ENCODE measurements at regions of chr11 and their contacts with region 1.

Region 1: DNA sequence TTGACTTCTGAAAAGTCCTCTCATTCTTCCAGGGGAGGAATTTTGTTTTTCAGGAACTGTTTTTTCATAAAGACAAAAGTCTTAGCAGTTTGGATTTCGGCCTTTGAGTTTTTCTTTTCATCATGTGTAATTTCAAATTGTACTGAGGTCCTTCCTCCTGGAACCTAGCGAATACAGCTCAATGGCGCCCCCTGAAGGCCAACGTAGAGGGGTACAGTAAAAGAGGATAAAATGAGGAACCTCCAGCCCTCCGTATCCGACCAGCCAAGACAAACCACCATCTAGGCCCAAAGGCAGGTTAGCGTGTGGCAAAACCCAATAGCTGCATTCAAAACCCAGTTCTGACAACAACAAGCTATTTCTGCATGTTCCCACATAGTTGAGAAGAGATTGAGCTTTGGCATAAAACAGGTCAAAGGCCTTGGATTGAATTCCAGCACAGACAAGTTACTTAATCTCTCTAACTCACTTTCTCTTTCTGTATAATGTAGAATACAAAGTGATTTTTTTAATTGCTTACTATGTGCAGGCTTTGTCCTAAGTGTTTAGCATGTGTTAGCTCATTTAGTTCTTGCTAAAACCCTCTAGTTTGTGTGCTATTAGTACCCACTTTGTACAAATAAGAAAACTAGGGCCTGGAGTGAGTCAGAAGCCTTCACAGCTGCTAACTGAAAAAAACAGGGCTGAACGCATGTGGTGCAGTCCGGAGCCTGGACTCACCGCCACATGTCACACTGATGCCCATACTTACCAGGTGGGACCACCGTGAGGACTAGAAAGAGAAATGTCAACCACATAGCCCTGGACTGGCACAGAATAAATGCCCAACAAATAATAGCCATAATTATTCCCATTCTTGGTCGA is 43.2 kb upstream of the ETS1 start:
- DNase-seq: peak; percentile 85 to 96 (median 93)
- ATAC-seq: peak; percentile 75
- H3K4me3 ChIP-seq: no peak overlapping the region
- H3K4me3 Mint-ChIP-seq: peak overlapping the region; percentile 61
- H3K27ac ChIP-seq: peak overlapping the region in 1 of 2 experiments; percentile 38
- H3K27ac Mint-ChIP-seq: peak overlapping the region; percentile 98
- H3K4me1 ChIP-seq: peaks cover 67% of the 10 kb centered on the region
- H3K4me1 Mint-ChIP-seq: peaks cover 65% of the 10 kb centered on the region
- H3K27me3 ChIP-seq: no peaks in the 10 kb centered on the region
- H3K27me3 Mint-ChIP-seq: no peaks in the 10 kb centered on the region
- CTCF ChIP-seq: peak; percentile 82

Region 2: GRCh38 chr11:128005562-128005961 is 625.0 kb before region 1 on chr11:
- CTCF ChIA-PET with region 1: no interaction called
- POLR2A ChIA-PET with region 1: no interaction called
- intact Hi-C with region 1: no loop called
- DNase-seq: no peak
- ATAC-seq: no peak
- H3K4me3 ChIP-seq: no peak overlapping the region
- H3K4me3 Mint-ChIP-seq: no peak overlapping the region
- H3K27ac ChIP-seq: no peak overlapping the region
- H3K27ac Mint-ChIP-seq: no peak overlapping the region
- H3K4me1 ChIP-seq: no peaks in the 10 kb centered on the region
- H3K4me1 Mint-ChIP-seq: no peaks in the 10 kb centered on the region
- H3K27me3 ChIP-seq: peaks cover 2 to 7% of the 10 kb centered on the region in 2 experiments
- H3K27me3 Mint-ChIP-seq: peaks cover 51% of the 10 kb centered on the region
- CTCF ChIP-seq: no peak

Region 3: GRCh38 chr11:128066399-128066798 is 564.2 kb before region 1 on chr11:
- CTCF ChIA-PET with region 1: no interaction called
- POLR2A ChIA-PET with region 1: no interaction called
- intact Hi-C with region 1: no loop called
- DNase-seq: no peak
- ATAC-seq: no peak
- H3K4me3 ChIP-seq: no peak overlapping the region
- H3K4me3 Mint-ChIP-seq: no peak overlapping the region
- H3K27ac ChIP-seq: no peak overlapping the region
- H3K27ac Mint-ChIP-seq: no peak overlapping the region
- H3K4me1 ChIP-seq: no peaks in the 10 kb centered on the region
- H3K4me1 Mint-ChIP-seq: peaks cover 1% of the 10 kb centered on the region
- H3K27me3 ChIP-seq: no peaks in the 10 kb centered on the region
- H3K27me3 Mint-ChIP-seq: no peaks in the 10 kb centered on the region
- CTCF ChIP-seq: no peak

Region 4: DNA sequence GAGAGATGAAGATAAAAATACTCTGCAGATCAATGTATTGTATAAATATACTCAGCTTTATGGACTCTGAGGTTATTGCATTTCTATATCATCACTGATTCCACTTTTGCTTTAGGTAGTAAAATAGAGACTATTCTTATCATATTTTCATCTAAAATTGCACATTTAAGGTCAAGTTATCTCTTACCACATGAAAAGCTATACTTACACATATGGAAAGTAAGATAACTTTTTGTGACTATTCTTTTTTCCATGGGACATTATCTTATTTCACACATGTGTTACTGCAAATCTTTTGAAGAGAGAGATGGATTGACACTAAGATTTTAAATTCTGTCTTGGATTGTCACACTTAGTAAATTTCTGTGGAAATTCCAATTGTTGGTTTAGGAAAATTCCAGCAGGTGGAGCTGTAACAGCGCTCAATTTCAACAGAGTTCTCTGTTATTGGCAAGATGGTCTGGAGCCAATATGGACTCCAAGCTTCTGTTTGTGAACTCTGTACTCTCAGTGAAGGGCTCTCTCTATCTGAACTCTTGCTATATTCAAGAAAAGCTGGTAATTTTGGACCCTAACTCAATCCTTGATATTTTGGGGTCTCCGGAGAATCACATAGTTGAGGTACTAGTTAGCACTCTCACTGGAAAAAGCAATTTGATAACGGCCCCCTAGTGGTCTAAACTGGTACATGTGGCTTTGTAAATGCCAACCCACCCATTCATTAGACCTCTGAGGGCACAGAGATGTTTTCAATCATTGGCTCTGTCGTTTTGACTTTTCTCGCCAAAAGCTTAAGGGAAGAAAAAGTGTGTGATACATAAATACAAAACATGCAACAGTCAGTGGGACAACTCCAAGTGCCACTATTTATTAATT is 472.9 kb before region 1 on chr11:
- CTCF ChIA-PET with region 1: interaction called, 74 read pairs
- POLR2A ChIA-PET with region 1: interaction called, 3 read pairs
- intact Hi-C with region 1: loop called in 1 of 2 experiments (anchors 1 kb)
- DNase-seq: peak; percentile 16 to 85 (median 61)
- ATAC-seq: peak; percentile 90
- H3K4me3 ChIP-seq: peak overlapping the region; percentile 35 to 38
- H3K4me3 Mint-ChIP-seq: peak overlapping the region; percentile 81
- H3K27ac ChIP-seq: no peak overlapping the region
- H3K27ac Mint-ChIP-seq: peak overlapping the region; percentile 77
- H3K4me1 ChIP-seq: no peaks in the 10 kb centered on the region
- H3K4me1 Mint-ChIP-seq: peaks cover 7% of the 10 kb centered on the region
- H3K27me3 ChIP-seq: no peaks in the 10 kb centered on the region
- H3K27me3 Mint-ChIP-seq: no peaks in the 10 kb centered on the region
- CTCF ChIP-seq: peak; percentile 98

Region 5: GRCh38 chr11:128302425-128303186 is 328.0 kb before region 1 on chr11:
- CTCF ChIA-PET with region 1: interaction called, 53 read pairs
- POLR2A ChIA-PET with region 1: interaction called, 5 read pairs
- intact Hi-C with region 1: no loop called
- DNase-seq: peak; percentile 49 to 97 (median 72)
- ATAC-seq: peak; percentile 85
- H3K4me3 ChIP-seq: peak overlapping the region; percentile 46 to 51
- H3K4me3 Mint-ChIP-seq: peak overlapping the region; percentile 88
- H3K27ac ChIP-seq: peak overlapping the region; percentile 87 to 89
- H3K27ac Mint-ChIP-seq: peak overlapping the region; percentile 99
- H3K4me1 ChIP-seq: peaks cover 88% of the 10 kb centered on the region
- H3K4me1 Mint-ChIP-seq: peaks cover 92% of the 10 kb centered on the region
- H3K27me3 ChIP-seq: no peaks in the 10 kb centered on the region
- H3K27me3 Mint-ChIP-seq: no peaks in the 10 kb centered on the region
- CTCF ChIP-seq: no peak

Region 6: GRCh38 chr11:128488471-128488870 is 142.1 kb before region 1 on chr11:
- CTCF ChIA-PET with region 1: interaction called, 19 read pairs
- POLR2A ChIA-PET with region 1: interaction called, 3 read pairs
- intact Hi-C with region 1: no loop called
- DNase-seq: peak in 1 of 9 experiments; percentile 49
- ATAC-seq: peak; percentile 54
- H3K4me3 ChIP-seq: no peak overlapping the region
- H3K4me3 Mint-ChIP-seq: peak overlapping the region; percentile 55
- H3K27ac ChIP-seq: peak overlapping the region; percentile 12 to 61
- H3K27ac Mint-ChIP-seq: peak overlapping the region; percentile 89
- H3K4me1 ChIP-seq: peaks cover 97% of the 10 kb centered on the region
- H3K4me1 Mint-ChIP-seq: peaks cover 96% of the 10 kb centered on the region
- H3K27me3 ChIP-seq: no peaks in the 10 kb centered on the region
- H3K27me3 Mint-ChIP-seq: no peaks in the 10 kb centered on the region
- CTCF ChIP-seq: no peak

Region 7: DNA sequence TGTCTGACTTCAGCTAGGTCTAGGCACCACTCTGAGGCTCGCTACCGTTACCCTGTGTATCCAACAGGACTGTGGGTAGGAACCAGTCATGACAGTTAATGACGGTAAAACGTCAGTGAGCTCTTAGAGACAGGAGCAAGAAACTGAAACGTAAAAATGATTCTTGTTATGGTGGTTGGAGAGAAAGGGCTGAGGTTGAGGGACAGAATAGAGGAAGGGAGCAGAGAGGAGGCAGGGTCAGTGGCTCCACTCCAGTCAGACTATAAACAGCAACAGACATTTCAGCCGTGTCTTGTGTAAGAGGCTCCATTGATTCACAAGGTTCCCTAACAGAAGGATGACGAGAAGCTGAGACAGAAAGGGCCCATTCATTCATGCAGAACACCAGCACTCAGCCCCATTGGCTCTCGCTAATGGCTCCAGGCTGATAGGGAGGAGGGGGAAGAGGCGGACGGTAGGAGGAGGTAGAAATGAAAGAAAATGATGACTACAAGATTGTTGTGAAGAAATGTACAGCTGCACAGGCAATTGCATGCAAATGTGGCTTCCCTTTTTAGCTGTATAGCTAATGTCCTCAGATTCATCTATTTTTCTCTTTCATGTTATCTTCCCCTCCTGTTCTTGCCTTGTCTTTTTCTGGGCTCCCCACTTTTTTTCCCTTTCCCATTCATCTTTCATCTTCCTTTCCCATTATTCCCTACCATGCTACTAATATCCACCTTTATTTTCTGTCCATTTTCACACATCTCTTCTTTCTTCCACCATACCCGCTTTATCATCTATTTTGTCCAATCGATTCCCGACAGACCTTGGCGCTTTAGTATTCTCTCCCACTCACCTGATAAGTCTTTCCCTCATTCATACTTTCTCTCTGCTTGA is 77.6 kb before region 1 on chr11:
- CTCF ChIA-PET with region 1: interaction called, 10 read pairs
- POLR2A ChIA-PET with region 1: interaction called, 15 read pairs
- intact Hi-C with region 1: loop called (anchors 2 kb)
- DNase-seq: peak in 2 of 9 experiments; percentile 25 to 54
- ATAC-seq: no peak
- H3K4me3 ChIP-seq: no peak overlapping the region
- H3K4me3 Mint-ChIP-seq: peak overlapping the region; percentile 38
- H3K27ac ChIP-seq: peak overlapping the region; percentile 2 to 86
- H3K27ac Mint-ChIP-seq: peak overlapping the region; percentile 91
- H3K4me1 ChIP-seq: peaks cover 59% of the 10 kb centered on the region
- H3K4me1 Mint-ChIP-seq: peaks cover 60% of the 10 kb centered on the region
- H3K27me3 ChIP-seq: no peaks in the 10 kb centered on the region
- H3K27me3 Mint-ChIP-seq: no peaks in the 10 kb centered on the region
- CTCF ChIP-seq: no peak

Region 8: GRCh38 chr11:128757235-128757711 is 126.7 kb after region 1 on chr11:
- CTCF ChIA-PET with region 1: interaction called, 59 read pairs
- POLR2A ChIA-PET with region 1: interaction called, 5 read pairs
- intact Hi-C with region 1: loop called (anchors 1 kb)
- DNase-seq: peak; percentile 48 to 90 (median 71)
- ATAC-seq: peak; percentile 99
- H3K4me3 ChIP-seq: no peak overlapping the region
- H3K4me3 Mint-ChIP-seq: peak overlapping the region; percentile 35
- H3K27ac ChIP-seq: peak overlapping the region in 1 of 2 experiments; percentile 30
- H3K27ac Mint-ChIP-seq: peak overlapping the region; percentile 88
- H3K4me1 ChIP-seq: peaks cover 67% of the 10 kb centered on the region
- H3K4me1 Mint-ChIP-seq: peaks cover 89% of the 10 kb centered on the region
- H3K27me3 ChIP-seq: no peaks in the 10 kb centered on the region
- H3K27me3 Mint-ChIP-seq: no peaks in the 10 kb centered on the region
- CTCF ChIP-seq: peak; percentile 76